ENCODE measurements at regions of chr11 and their contacts with region 1.

Region 1: GRCh38 chr11:58142761-58143160 is 17.4 kb upstream of the OR9I1 start:
- DNase-seq: peak in 2 of 10 donors; percentile 37 to 40
- H3K4me3 ChIP-seq: no peak overlapping the region
- H3K27ac ChIP-seq: no peak overlapping the region
- H3K27me3 ChIP-seq: no peaks in the 10 kb centered on the region
- CTCF ChIP-seq: no peak

Region 2: GRCh38 chr11:57903564-57904123 is 239.1 kb before region 1 on chr11:
- intact Hi-C with region 1: no loop called
- DNase-seq: peak in 8 of 10 donors; percentile 36 to 76 (median 59)
- H3K4me3 ChIP-seq: no peak overlapping the region
- H3K27ac ChIP-seq: peak overlapping the region in 11 of 59 donors; percentile 2 to 51 (median 21)
- H3K27me3 ChIP-seq: peaks cover 0 to 5% (median 0%) of the 10 kb centered on the region in 45 donors
- CTCF ChIP-seq: no peak

Region 3: GRCh38 chr11:58006940-58007339 is 135.8 kb before region 1 on chr11:
- intact Hi-C with region 1: no loop called
- DNase-seq: no peak
- H3K4me3 ChIP-seq: no peak overlapping the region
- H3K27ac ChIP-seq: no peak overlapping the region
- H3K27me3 ChIP-seq: peaks cover 0 to 4% (median 0%) of the 10 kb centered on the region in 45 donors
- CTCF ChIP-seq: no peak

Region 4: GRCh38 chr11:58495906-58496305 is 353.1 kb after region 1 on chr11:
- intact Hi-C with region 1: loop called in 1 of 2 experiments (anchors 10 kb)
- DNase-seq: peak in 4 of 10 donors; percentile 37 to 67 (median 52)
- H3K4me3 ChIP-seq: no peak overlapping the region
- H3K27ac ChIP-seq: peak overlapping the region in 50 of 59 donors; percentile 1 to 88 (median 64)
- H3K27me3 ChIP-seq: no peaks in the 10 kb centered on the region
- CTCF ChIP-seq: peak in 17 of 56 donors; percentile 9 to 49 (median 20)